Aorta (tissue), 5 donors: ENCODE measurements at regions of chr9 and their contacts with region 1.

Region 1: DNA sequence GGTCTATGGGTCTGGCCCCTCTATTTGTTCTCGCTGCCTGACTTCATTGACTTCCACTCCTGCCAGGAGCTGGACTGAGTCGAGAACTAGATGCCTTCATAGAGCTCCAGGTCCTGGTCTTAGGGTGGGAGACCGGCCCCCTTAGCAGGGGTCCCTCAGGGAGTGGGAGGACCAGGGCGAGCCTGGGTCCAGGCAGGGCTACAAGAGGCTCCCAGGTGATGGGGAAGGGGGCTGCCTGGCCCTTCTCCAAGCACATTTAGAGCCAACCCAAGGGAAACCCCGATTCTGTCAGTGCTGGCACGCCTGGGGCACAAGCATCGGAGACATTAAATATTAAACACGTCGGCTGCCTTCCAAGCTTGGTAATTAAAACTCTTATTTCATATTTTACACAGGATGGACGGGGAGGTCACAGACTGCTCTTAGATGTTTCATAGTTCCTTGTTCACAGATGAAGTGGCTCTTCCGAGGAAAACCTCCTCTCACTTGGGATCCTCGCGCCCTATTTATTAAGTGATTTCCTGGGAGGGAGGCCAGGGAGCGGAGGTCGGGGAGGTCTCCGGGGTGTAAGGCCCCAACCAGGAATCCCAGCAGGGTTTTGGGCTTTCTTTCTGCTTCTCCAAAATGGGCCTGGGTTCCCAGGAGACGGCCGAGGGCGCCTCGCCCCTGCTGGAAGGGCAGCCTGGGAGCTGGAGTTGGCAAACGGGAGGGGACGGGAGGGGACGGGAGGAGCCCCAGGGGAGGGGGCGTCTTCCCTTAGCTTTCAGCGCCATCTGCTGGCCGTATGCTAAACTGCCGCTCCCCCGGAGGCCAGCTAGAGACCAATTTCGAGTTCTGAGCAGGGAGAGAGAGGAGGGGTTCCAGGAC is 23.4 kb upstream of the ZBTB43 start:
- DNase-seq: peak; percentile 81 to 94
- ATAC-seq: peak; percentile 86
- H3K4me3 ChIP-seq: no peak overlapping the region
- H3K27ac ChIP-seq: no peak overlapping the region
- H3K4me1 ChIP-seq: no peaks in the 10 kb centered on the region
- H3K27me3 ChIP-seq: no peaks in the 10 kb centered on the region

Region 2: GRCh38 chr9:126500684-126501382 is 280.6 kb before region 1 on chr9:
- intact Hi-C with region 1: loop called in 1 of 2 experiments (anchors 10 kb)
- DNase-seq: peak; percentile 83 to 93
- ATAC-seq: peak; percentile 81
- H3K4me3 ChIP-seq: no peak overlapping the region
- H3K27ac ChIP-seq: no peak overlapping the region
- H3K4me1 ChIP-seq: no peaks in the 10 kb centered on the region
- H3K27me3 ChIP-seq: no peaks in the 10 kb centered on the region

Region 3: GRCh38 chr9:126604059-126605055 is 177.1 kb before region 1 on chr9:
- intact Hi-C with region 1: loop called in 1 of 2 experiments (anchors 5 kb)
- DNase-seq: peak in 1 of 2 donors; percentile 55
- ATAC-seq: peak; percentile 85
- H3K4me3 ChIP-seq: no peak overlapping the region
- H3K27ac ChIP-seq: no peak overlapping the region
- H3K4me1 ChIP-seq: no peaks in the 10 kb centered on the region
- H3K27me3 ChIP-seq: no peaks in the 10 kb centered on the region

Region 4: GRCh38 chr9:126704873-126705766 is 76.3 kb before region 1 on chr9:
- intact Hi-C with region 1: loop called (anchors 1 to 5 kb)
- DNase-seq: peak; percentile 81 to 92
- ATAC-seq: peak; percentile 83
- H3K4me3 ChIP-seq: no peak overlapping the region
- H3K27ac ChIP-seq: no peak overlapping the region
- H3K4me1 ChIP-seq: no peaks in the 10 kb centered on the region
- H3K27me3 ChIP-seq: no peaks in the 10 kb centered on the region

Region 5: GRCh38 chr9:126745574-126746411 is 35.6 kb before region 1 on chr9:
- intact Hi-C with region 1: no loop called
- DNase-seq: no peak
- ATAC-seq: no peak
- H3K4me3 ChIP-seq: no peak overlapping the region
- H3K27ac ChIP-seq: no peak overlapping the region
- H3K4me1 ChIP-seq: no peaks in the 10 kb centered on the region
- H3K27me3 ChIP-seq: no peaks in the 10 kb centered on the region